OCI-LY7 (cell line): ENCODE measurements at regions of chr14 and their contacts with region 1.

Region 1: DNA sequence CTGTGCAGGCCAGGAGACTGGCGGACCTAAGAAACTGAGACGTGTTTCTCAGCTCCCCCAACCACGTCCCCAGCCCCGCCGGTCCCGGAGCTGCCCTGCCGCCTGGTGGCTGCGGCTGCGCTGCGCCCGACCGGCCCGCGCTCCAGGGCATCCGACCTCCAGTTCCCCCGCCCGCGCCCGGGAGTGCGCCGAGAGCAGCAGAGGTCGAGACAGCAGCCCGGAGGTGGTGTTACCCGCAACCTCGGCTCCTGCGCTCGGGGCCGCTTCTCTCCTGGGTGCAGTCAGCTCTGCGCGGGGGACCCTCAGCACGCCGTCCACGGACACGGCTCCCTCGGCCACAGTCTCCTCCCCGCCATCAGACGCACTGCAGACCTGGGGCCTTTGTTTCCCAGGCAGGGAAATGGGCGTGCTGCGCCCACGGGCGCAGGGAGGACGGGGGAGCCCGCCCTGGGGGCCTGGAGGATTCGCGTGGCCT is 21.6 kb upstream of the GPR132 start:
- DNase-seq: peak; percentile 80
- H3K4me3 ChIP-seq: peak overlapping the region; percentile 47
- H3K27ac ChIP-seq: no peak overlapping the region
- H3K4me1 ChIP-seq: no peaks in the 10 kb centered on the region
- CTCF ChIP-seq: peak; percentile 77

Region 2: DNA sequence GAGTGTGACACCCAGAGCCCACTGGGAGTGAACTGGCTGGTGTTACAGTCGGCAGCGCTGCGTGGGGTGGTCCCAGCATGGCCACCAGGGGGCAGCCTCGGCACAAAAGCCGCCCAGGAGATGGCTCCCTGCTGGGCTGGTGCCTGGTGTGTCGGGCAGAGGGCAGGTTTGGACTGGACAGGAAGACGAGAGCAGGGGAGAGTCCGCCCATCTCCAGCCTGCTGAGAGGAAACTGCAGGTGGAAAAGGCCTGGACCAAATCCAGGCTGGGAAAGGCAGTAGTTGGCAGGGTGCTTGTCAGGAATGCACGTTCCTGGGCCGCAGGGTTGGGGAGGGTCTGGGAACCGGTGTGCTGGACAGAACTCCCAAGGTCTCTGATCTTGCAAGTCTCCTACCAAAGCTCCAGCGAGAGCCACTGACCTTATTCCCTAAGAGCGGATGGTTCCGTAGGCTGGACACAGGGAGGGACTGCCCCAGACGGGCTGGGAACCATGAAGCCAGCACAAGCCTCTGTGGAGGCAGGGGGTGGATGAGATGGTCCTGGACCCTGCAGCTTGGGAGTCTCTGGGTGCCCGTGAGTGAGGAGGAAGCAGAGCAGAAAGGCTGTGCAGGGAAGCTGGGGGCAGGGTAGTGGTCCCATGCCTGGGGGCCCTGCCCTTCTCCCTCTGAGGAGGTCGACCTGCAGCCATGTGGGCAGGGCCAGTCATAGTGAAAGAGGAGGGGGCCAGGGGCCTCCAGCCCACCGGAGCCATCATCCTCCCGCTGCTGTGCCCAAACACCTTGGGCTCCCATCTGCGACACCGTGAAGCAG is 110.5 kb before region 1 on chr14:
- CTCF ChIA-PET with region 1: no interaction called
- POLR2A ChIA-PET with region 1: no interaction called
- intact Hi-C with region 1: loop called (anchors 2 kb)
- DNase-seq: peak; percentile 75
- H3K4me3 ChIP-seq: no peak overlapping the region
- H3K27ac ChIP-seq: no peak overlapping the region
- H3K4me1 ChIP-seq: no peaks in the 10 kb centered on the region
- CTCF ChIP-seq: peak; percentile 86

Region 3: GRCh38 chr14:105180592-105181548 is 94.0 kb after region 1 on chr14 and contains the start of gene NUDT14:
- CTCF ChIA-PET with region 1: interaction called, 3 read pairs
- POLR2A ChIA-PET with region 1: no interaction called
- intact Hi-C with region 1: loop called (anchors 5 kb)
- DNase-seq: peak; percentile 84
- H3K4me3 ChIP-seq: peak within 1 kb of the TSS; percentile 68
- H3K27ac ChIP-seq: no peak within 1 kb of the TSS
- H3K4me1 ChIP-seq: peaks cover 30% of the 10 kb centered on the region
- CTCF ChIP-seq: no peak
- total RNA-seq, gene NUDT14: 19.5 and 32.1 TPM in 2 replicates

Region 4: DNA sequence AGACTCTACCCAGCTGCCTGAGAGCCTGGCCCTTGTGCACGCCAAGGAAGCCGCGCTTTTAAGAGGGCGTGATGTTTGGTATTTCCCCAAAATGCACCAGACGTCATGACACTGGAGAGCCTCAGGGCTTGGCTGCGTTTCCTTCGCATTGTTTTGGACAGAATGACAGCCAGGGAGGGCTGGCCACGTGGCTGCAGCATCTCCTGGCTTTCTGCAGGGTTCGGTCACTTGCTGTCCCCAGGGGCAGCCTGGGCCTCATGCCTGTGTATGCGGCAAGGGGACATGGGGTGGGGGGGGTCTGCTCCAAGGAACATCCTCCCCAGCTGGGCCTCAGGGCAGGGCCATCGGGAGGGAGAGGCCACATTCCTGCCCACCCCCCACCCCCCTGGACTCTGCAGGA is 110.4 kb after region 1 on chr14:
- CTCF ChIA-PET with region 1: no interaction called
- POLR2A ChIA-PET with region 1: no interaction called
- intact Hi-C with region 1: no loop called
- DNase-seq: no peak
- H3K4me3 ChIP-seq: no peak overlapping the region
- H3K27ac ChIP-seq: no peak overlapping the region
- H3K4me1 ChIP-seq: peaks cover 22% of the 10 kb centered on the region
- CTCF ChIP-seq: no peak

Region 5: GRCh38 chr14:105281371-105282097 is 194.7 kb after region 1 on chr14:
- CTCF ChIA-PET with region 1: no interaction called
- POLR2A ChIA-PET with region 1: no interaction called
- intact Hi-C with region 1: loop called (anchors 1 kb)
- DNase-seq: peak; percentile 71
- H3K4me3 ChIP-seq: no peak overlapping the region
- H3K27ac ChIP-seq: no peak overlapping the region
- H3K4me1 ChIP-seq: no peaks in the 10 kb centered on the region
- CTCF ChIP-seq: peak; percentile 93

Region 6: DNA sequence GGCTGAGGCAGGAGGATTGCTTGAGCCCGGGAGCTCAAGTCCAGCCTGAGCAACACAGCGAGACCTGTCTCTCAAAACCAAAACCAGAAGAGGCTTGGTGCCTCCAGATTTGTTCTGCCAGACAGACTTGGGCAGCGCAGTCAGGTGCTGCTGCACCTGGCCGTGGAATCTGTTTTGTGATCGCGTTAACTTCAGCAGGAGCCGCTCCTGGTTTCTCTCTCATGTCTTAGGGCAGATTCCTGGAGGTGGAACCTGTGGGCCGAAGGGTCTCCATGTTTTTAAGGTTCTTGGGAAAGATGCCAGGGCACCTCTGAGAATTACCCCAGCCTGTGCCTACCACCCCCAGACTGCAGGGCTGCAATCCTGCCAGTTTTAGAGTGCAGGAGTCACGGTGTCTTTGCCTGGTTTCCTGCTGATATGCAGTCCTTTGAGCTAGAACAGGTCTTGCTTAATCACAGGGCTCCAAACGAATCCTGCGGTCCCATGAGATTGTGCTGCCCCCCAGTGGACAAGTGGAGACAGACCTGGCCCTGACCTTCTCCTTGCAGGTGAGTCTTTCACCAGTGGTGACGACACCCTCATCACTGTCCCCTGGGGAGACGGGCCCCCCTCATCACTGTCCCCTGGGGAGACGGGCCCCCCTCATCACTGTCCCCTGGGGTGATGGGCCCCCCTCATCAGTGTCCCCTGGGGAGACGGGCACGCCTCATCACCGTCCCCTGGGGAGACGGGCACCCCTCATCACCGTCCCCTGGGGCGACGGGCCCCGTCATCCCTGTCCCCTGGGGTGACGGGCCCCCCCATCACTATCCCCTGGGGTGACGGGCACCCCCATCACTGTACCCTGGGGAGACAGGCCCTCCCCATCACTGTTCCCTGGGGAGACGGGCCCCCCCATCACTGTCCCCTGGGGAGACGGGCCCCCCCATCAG is 265.3 kb after region 1 on chr14:
- CTCF ChIA-PET with region 1: no interaction called
- POLR2A ChIA-PET with region 1: no interaction called
- intact Hi-C with region 1: loop called (anchors 1 kb)
- DNase-seq: peak; percentile 87
- H3K4me3 ChIP-seq: no peak overlapping the region
- H3K27ac ChIP-seq: no peak overlapping the region
- H3K4me1 ChIP-seq: no peaks in the 10 kb centered on the region
- CTCF ChIP-seq: peak; percentile 85